ENCODE measurements at regions of chr10 and their contacts with region 1.

Region 1: GRCh38 chr10:42753126-42753506 is 29.5 kb upstream of the BMS1 start:
- DNase-seq: peak; percentile 89
- ATAC-seq: peak; percentile 90
- H3K4me3 ChIP-seq: peak overlapping the region; percentile 66
- H3K27ac ChIP-seq: no peak overlapping the region
- H3K4me1 ChIP-seq: peaks cover 12% of the 10 kb centered on the region
- H3K27me3 ChIP-seq: peaks cover 51% of the 10 kb centered on the region
- CTCF ChIP-seq: peak; percentile 89

Region 2: GRCh38 chr10:42609872-42610271 is 143.2 kb before region 1 on chr10:
- CTCF ChIA-PET with region 1: no interaction called
- POLR2A ChIA-PET with region 1: no interaction called
- intact Hi-C with region 1: no loop called
- DNase-seq: no peak
- ATAC-seq: no peak
- H3K4me3 ChIP-seq: no peak overlapping the region
- H3K27ac ChIP-seq: no peak overlapping the region
- H3K4me1 ChIP-seq: no peaks in the 10 kb centered on the region
- H3K27me3 ChIP-seq: no peaks in the 10 kb centered on the region
- CTCF ChIP-seq: no peak

Region 3: DNA sequence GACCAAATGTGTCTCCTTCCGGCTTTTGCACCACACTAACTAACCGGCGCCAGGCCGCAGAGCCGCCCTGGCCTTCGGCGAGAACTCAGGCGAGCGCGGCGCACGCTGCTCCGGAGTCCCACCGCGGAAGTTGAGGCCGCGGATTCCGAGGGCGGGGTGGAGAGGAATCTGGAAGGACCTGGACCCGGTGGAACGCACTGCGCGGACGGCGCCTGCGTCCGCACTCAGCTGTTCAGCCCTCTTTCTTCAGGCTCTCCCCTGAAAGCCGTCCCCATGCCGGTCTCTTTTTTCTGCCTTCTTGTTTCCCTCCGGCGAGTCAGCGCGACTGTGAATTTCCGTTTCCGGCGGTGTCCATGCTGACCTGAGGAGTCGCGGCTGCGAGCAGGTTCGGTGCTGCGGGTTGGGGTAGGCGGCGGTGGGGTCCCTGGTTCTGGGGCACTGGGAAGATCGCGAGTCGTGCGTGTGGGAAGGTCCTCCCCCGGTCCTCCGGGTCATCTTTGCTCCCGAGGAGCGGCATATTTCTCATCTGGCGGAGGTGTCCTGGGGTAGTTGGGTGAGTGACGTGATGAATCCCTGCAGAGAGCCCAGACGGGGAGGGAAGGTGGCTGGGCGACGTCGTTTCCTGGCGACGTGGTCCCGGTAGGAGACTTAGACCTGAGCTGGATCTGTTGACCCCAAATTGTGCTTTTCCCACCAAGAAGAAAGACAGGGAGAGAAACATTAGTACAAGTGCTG is 29.5 kb after region 1 on chr10 and contains the start of gene BMS1:
- CTCF ChIA-PET with region 1: interaction called, 6 read pairs
- POLR2A ChIA-PET with region 1: no interaction called
- intact Hi-C with region 1: loop called (anchors 1 kb)
- DNase-seq: peak; percentile 96
- ATAC-seq: peak; percentile 90
- H3K4me3 ChIP-seq: peak within 1 kb of the TSS; percentile 79
- H3K27ac ChIP-seq: peak within 1 kb of the TSS; percentile 65
- H3K4me1 ChIP-seq: peaks cover 14% of the 10 kb centered on the region
- H3K27me3 ChIP-seq: no peaks in the 10 kb centered on the region
- CTCF ChIP-seq: no peak
- total RNA-seq, gene BMS1: 36.6 and 41.9 TPM in 2 replicates

Region 4: GRCh38 chr10:42801135-42801534 is 48.0 kb after region 1 on chr10:
- CTCF ChIA-PET with region 1: no interaction called
- POLR2A ChIA-PET with region 1: no interaction called
- intact Hi-C with region 1: no loop called
- DNase-seq: no peak
- ATAC-seq: no peak
- H3K4me3 ChIP-seq: no peak overlapping the region
- H3K27ac ChIP-seq: no peak overlapping the region
- H3K4me1 ChIP-seq: no peaks in the 10 kb centered on the region
- H3K27me3 ChIP-seq: no peaks in the 10 kb centered on the region
- CTCF ChIP-seq: no peak

Region 5: GRCh38 chr10:43105102-43105785 is 352.1 kb after region 1 on chr10:
- CTCF ChIA-PET with region 1: no interaction called
- POLR2A ChIA-PET with region 1: no interaction called
- intact Hi-C with region 1: loop called (anchors 1 kb)
- DNase-seq: peak; percentile 78
- ATAC-seq: peak; percentile 93
- H3K4me3 ChIP-seq: peak overlapping the region; percentile 66
- H3K27ac ChIP-seq: no peak overlapping the region
- H3K4me1 ChIP-seq: 0 out of 2 replicates have a peak, but pooled peaks cover 4% of the 10 kb centered on the region
- H3K27me3 ChIP-seq: peaks cover 4% of the 10 kb centered on the region; the same call in 1 of the 2 replicates
- CTCF ChIP-seq: peak; percentile 98

Region 6: DNA sequence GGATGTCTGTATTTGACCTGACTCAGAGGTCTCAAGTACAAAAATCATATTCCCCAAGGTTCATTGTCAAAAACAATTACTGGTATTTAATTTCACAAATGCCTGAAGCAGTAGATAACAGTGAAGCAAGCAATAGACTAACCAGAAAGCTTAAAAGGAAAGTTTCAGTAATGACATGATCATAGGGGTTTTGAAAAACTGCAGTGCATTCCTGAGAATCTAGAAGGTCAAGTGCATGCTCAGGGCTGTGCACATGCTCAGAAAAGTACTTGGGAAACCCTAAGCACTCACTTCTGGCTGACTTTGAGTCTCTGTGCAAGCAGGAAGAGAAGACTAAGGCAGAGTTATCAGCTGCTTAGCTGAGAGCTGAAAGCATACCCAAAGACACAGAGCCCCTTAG is 486.7 kb after region 1 on chr10:
- CTCF ChIA-PET with region 1: no interaction called
- POLR2A ChIA-PET with region 1: no interaction called
- intact Hi-C with region 1: no loop called
- DNase-seq: no peak
- ATAC-seq: no peak
- H3K4me3 ChIP-seq: no peak overlapping the region
- H3K27ac ChIP-seq: no peak overlapping the region
- H3K4me1 ChIP-seq: no peaks in the 10 kb centered on the region
- H3K27me3 ChIP-seq: no peaks in the 10 kb centered on the region; the same call in 1 of the 2 replicates
- CTCF ChIP-seq: no peak

Measured in PC-3 (cell line).